Motor neuron (in vitro differentiated cells): ENCODE measurements at regions of chr19 and their contacts with region 1.

Region 1: DNA sequence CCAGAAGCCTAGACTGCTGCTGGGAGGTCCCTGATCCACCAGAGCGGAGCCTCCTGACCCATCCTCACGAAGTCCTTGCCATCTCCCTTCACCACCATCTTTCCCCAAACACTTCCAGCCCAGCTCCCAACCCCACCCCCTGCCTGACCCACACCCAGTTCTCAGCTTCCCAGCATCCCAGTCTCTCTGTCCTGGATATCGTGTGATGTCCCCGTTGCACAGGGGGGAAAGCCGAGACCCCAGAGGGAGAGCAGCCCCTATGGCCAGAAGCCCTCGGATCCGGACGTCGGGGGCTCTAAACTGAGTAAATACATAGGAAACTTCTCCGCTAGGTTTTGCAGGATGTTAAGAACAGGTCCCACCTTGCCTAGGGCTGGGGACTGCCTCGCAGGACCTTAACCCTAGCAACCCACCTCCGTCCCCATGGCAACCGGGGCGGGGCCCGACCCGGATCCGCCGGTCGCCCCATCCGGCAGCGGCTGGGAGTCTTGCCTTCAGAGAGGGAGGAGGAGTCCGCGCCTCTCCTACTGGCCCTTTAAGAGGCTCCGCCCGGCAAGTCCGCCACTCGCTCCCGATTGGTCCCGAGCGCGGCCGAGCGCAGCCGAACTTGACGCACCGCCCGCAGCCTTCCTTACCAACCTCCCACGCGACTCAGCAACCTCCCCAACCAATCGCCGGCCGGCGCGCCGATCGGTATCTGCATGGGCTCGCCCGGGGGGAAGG is 451 bp upstream of the HMG20B start:
- ATAC-seq: peak; percentile 82 to 95 (median 92)
- H3K4me3 ChIP-seq: peak overlapping the region; percentile 34 to 84 (median 62)
- H3K27ac ChIP-seq: no peak overlapping the region
- H3K4me1 ChIP-seq: peaks cover 12% of the 10 kb centered on the region in 2 donors

Region 2: DNA sequence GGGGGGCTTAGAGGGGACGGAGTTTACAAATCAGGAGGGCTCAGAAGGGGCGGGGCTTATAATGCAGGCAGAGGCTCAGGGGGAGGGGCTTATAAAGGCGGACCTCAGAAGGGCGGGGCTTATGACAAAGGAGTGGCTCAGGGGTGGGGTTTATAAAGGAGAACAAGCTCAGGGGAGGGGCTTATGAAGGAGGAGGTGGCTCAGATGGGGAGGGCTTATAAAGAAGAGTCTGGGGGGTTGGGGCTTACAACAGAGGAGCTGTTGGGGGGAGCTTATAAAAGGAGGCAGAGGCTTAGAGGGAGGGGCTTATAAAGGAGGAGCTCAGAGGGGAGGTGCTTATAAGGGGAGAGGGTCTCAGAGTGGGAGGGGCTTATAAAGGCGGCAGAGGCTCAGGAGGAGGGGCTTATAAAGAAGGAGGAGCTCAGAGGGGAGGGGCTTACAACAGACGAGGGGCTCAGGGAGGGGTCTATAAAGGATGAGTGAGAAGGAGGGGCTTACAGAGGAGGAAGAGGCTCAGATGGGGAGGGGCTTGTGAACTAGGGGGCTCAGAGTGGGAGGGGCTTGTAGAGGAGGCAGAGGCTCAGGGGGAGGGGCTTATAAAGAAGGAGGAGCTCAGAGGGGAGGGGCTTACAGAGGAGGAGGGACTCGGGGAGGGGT is 93.0 kb before region 1 on chr19:
- in situ Hi-C with region 1: no loop called
- ATAC-seq: peak in 6 of 8 experiments; percentile 4 to 43 (median 20)
- H3K4me3 ChIP-seq: no peak overlapping the region
- H3K27ac ChIP-seq: no peak overlapping the region
- H3K4me1 ChIP-seq: peaks cover 6 to 9% of the 10 kb centered on the region in 2 donors

Region 3: GRCh38 chr19:3700221-3701032 is 128.1 kb after region 1 on chr19 and contains the start of gene PIP5K1C:
- in situ Hi-C with region 1: loop called in 1 of 9 experiments (anchors 25 kb)
- ATAC-seq: peak; percentile 76 to 93 (median 90)
- H3K4me3 ChIP-seq: peak within 1 kb of the TSS; percentile 61 to 100 (median 93)
- H3K27ac ChIP-seq: peak within 1 kb of the TSS; percentile 62 to 84
- H3K4me1 ChIP-seq: peaks cover 9 to 10% of the 10 kb centered on the region in 2 donors
- total RNA-seq, gene PIP5K1C: 6.7 to 21.4 (median 13.7) TPM